ENCODE measurements at regions of chr19 and their contacts with region 1.

Region 1: DNA sequence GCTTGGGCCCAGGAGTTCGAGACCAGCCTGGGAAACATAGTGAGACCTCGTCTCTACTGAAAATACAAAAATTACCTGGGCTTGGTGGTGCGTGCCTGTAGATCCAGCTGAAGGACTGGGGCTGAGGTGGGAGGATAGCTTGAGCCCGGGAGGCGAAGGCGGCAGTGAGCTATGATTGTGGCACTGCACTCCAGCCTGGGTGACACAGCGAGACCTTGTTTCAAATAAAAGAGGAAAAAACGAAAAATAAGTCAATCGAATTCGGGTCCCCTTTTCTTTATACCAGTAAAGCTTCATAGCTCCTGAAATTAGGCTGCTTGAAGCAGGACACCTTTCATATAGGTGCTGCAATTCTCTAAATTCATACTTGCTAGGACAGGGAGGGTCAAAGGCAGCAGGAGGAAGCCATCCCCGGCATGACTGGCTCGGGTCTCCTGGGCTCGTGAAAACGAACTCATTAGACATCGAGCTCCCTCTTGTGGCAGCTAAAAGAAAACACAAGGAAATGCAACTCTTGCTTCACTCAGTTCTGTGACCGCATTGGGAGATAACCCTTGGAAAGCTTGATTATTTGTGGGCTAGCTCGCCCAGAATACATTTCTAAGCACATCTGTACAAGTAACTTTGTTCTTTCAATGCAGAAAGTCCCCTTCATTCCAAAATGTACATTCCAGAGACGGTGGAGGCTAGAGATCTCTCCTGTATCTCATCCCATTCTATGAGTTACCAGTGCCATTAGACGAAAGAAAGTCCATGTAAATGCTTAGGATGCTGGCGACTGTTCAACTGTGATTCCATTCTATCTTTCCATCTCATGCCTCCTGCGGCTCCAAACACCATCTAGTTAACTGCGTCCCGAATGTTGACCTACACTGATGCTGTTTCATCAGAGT is 16.8 kb downstream of the FPR2 start:
- DNase-seq: peak in 4 of 5 donors; percentile 73 to 79 (median 76)
- ATAC-seq: peak; percentile 85 to 96 (median 94)
- H3K4me3 ChIP-seq: no peak overlapping the region
- H3K27ac ChIP-seq: no peak overlapping the region
- H3K4me1 ChIP-seq: peaks cover 0 to 33% (median 3%) of the 10 kb centered on the region in 12 donors
- H3K27me3 ChIP-seq: peaks cover 0 to 8% (median 0%) of the 10 kb centered on the region in 9 donors
- CTCF ChIP-seq: peak; percentile 66 to 85 (median 76)
- POLR2A ChIP-seq: no peak

Region 2: DNA sequence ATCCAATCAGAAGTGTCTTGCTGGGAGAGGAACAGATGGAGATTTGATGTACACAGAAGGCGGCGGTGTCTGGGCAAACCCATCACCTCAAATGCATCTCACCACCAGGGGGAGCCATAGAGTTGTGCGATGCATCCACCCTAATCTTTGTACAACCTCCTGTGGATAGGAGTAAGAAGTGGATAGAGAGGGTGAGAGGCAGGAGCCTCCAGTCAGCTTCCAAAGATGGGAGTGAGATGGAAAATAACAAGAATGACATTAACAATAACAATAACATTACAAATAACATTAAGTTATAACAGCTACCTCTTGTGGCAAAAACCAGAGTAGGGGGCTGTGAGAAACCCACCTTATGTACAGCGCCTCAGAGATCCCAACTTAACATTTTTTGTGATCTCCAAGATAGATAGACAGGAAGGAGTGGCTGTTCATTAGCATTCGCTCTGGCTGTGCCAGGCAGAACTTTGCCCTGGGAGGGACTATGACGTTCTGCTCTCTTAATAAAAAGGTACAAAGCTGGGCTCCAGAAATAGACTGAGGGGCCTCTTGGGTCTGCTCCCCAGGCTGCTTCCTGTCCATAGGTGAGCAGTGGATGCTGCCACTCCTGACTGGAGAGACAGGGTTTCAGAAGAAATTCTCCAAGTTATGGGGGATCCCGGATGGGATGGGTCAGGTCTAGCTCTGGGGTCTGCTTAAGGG is 304.7 kb before region 1 on chr19:
- intact Hi-C with region 1: loop called in 9 of 10 experiments (anchors 2 to 10 kb)
- DNase-seq: peak in 4 of 5 donors; percentile 70 to 77 (median 72)
- ATAC-seq: peak; percentile 67 to 82 (median 78)
- H3K4me3 ChIP-seq: no peak overlapping the region
- H3K27ac ChIP-seq: no peak overlapping the region
- H3K4me1 ChIP-seq: peaks cover 0 to under 1% (median 0%) of the 10 kb centered on the region in 12 donors
- H3K27me3 ChIP-seq: peaks cover 0 to 38% (median 8%) of the 10 kb centered on the region in 9 donors
- CTCF ChIP-seq: peak; percentile 77 to 97 (median 86)
- POLR2A ChIP-seq: no peak

Region 3: GRCh38 chr19:51593969-51594773 is 183.6 kb before region 1 on chr19:
- intact Hi-C with region 1: loop called in 1 of 10 experiments (anchors 10 kb)
- DNase-seq: peak; percentile 98 to 99 (median 99)
- ATAC-seq: peak; percentile 100
- H3K4me3 ChIP-seq: peak overlapping the region; percentile 51 to 82 (median 70)
- H3K27ac ChIP-seq: peak overlapping the region in 10 of 12 donors; percentile 22 to 70 (median 44)
- H3K4me1 ChIP-seq: peaks cover 0 to 19% (median 12%) of the 10 kb centered on the region in 12 donors
- H3K27me3 ChIP-seq: peaks cover 0 to 20% (median under 1%) of the 10 kb centered on the region in 9 donors
- CTCF ChIP-seq: no peak
- POLR2A ChIP-seq: peak in 1 of 2 donors; percentile 52

Region 4: DNA sequence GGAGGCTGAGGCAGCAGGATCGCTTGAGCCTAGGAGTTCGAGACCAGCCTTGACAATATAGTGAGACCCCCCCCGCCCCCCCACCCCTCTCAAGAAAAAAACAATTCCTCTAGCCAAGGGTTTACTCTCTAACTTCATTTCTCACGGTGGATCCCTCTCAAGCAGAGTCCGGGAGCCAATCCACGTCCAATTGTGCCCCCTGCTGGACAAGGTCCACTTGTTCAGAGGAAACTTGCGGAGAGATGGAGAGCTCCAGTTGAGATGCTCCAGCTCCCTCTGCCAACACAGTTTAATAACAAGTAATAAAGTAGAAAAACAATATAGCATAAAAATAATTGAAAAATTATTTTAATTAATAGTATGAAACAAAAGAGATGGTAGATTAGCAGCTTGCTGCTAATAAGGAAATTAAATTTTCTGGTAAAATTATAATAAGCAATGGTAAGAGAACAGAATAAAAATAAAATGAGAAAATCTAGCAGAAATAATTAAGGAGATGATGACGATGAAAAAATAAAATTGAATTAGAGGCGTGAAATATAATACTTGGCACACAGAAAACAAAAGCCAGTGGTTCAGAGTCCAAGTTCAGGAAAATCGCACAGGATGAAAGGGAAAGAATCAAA is 116.7 kb before region 1 on chr19:
- intact Hi-C with region 1: loop called in 7 of 10 experiments (anchors 5 to 10 kb)
- DNase-seq: peak; percentile 70 to 79 (median 76)
- ATAC-seq: peak in 3 of 4 donors; percentile 68 to 86 (median 69)
- H3K4me3 ChIP-seq: no peak overlapping the region
- H3K27ac ChIP-seq: no peak overlapping the region
- H3K4me1 ChIP-seq: peaks cover 0 to 8% (median 0%) of the 10 kb centered on the region in 12 donors
- H3K27me3 ChIP-seq: peaks cover 0 to 40% (median 8%) of the 10 kb centered on the region in 9 donors
- CTCF ChIP-seq: peak; percentile 49 to 72 (median 59)
- POLR2A ChIP-seq: no peak

Region 5: DNA sequence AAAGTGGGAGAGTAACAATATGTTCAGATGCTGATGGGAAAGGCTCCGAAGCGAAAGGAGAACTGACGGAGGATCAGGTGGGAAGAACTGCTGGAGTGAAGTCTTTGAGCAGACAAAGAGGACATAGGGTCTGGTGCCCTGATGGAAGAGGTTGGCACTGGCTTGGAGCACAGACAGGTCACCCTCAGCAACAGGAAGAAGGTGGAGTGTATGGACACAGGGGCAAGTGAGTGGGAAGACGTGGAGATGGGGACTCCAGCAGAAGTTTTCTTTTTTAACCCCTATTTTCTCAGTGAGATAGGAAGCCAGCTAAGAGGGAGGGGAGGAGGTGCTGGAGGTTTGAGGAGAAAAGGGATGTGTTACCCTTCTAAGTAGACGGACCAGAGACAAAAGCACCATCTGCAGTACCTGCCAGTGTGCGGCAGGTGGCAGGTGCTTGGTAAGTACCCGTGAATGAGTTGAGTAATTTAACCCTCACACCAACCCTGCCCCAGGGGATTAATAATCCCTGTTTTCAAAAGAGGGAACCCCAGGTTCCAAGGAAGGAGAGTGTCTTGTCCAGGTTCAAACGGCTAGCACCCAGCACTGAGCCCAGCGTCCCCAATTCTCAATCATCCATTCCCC is 65.2 kb before region 1 on chr19:
- intact Hi-C with region 1: loop called in 1 of 10 experiments (anchors 5 kb)
- DNase-seq: no peak
- ATAC-seq: no peak
- H3K4me3 ChIP-seq: no peak overlapping the region
- H3K27ac ChIP-seq: no peak overlapping the region
- H3K4me1 ChIP-seq: no peaks in the 10 kb centered on the region
- H3K27me3 ChIP-seq: peaks cover 0 to 25% (median 0%) of the 10 kb centered on the region in 9 donors
- CTCF ChIP-seq: peak in 8 of 12 donors; percentile 9 to 42 (median 28)
- POLR2A ChIP-seq: no peak

Region 6: DNA sequence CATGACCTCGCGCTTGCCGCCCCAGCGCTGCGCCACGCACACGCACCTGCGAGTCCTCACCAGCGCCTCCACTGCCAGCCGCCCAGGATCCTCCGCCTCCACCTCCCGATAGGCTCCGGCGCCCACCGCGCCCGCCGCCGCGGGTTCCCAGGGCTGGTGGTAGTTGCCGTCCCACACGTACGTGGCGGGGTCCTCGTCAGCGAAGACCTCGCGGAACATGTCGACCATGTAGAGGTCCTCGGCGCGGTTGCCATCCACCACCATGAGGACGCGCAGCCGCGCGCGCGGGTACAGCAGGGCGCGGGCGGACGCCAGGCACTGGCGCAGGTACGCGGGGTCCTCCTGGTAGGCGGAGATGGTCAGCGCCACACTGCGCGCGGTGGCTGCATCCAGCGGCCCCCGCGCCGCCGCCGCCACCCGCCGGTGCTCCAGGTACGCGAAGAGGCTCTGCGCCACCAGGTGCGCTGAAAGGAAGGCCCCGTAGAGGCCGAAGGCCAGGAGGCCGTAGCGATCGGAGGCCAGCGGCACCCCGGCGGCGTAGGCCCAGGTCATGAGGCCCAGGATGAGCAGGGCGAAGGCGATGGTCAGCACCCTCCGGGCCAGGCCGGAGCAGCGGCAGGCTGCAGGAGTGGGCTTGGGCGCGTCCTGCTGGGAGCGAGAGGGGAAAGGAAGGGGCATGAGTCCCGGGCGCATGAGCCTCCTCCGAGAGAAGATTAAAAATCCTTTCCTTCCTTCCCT is 58.4 kb before region 1 on chr19:
- intact Hi-C with region 1: loop called in 2 of 10 experiments (anchors 2 to 5 kb)
- DNase-seq: no peak
- ATAC-seq: peak in 1 of 4 donors; percentile 18
- H3K4me3 ChIP-seq: peak overlapping the region in 11 of 12 donors; percentile 3 to 49 (median 34)
- H3K27ac ChIP-seq: no peak overlapping the region
- H3K4me1 ChIP-seq: peaks cover 0 to 13% (median 4%) of the 10 kb centered on the region in 12 donors
- H3K27me3 ChIP-seq: peaks cover 14 to 82% (median 44%) of the 10 kb centered on the region in 9 donors
- CTCF ChIP-seq: no peak
- POLR2A ChIP-seq: no peak

Region 7: DNA sequence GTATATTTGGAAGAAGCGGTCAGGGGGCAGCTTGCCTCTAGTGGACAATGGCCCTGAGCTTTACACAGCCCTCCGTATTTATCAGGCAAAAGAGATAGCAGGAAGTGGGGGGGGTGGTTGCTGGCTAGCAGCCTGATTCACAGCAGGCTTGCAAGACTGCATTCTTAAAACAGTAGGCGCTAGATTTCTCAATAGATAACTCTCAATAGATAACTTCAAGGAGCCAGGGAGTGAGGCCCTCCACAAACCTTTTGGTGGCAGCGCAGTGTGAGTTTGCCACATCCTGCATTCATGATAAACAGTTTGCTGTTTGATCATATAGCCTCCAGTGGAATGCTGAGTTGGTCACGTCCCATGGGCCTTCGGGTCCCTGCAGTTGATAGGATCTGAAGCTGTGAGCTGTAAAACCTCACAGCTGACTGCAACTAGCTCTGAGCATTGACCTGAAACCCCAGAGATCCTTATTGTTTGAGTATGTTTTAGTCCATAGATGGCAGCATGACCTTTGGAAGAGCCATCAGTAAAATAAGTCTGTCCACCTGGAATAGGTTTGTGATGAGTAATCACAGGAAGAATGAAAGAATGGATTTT is 29.4 kb after region 1 on chr19:
- intact Hi-C with region 1: loop called in 2 of 10 experiments (anchors 5 kb)
- DNase-seq: peak in 2 of 5 donors; percentile 19 to 37
- ATAC-seq: no peak
- H3K4me3 ChIP-seq: no peak overlapping the region
- H3K27ac ChIP-seq: peak overlapping the region in 2 of 12 donors; percentile 39 to 42
- H3K4me1 ChIP-seq: peaks cover 0 to 94% (median 11%) of the 10 kb centered on the region in 12 donors
- H3K27me3 ChIP-seq: no peaks in the 10 kb centered on the region
- CTCF ChIP-seq: no peak
- POLR2A ChIP-seq: no peak

Region 8: GRCh38 chr19:51884713-51885112 is 106.9 kb after region 1 on chr19:
- intact Hi-C with region 1: no loop called
- DNase-seq: no peak
- ATAC-seq: no peak
- H3K4me3 ChIP-seq: no peak overlapping the region
- H3K27ac ChIP-seq: no peak overlapping the region
- H3K4me1 ChIP-seq: peaks cover 0 to 13% (median 7%) of the 10 kb centered on the region in 12 donors
- H3K27me3 ChIP-seq: no peaks in the 10 kb centered on the region
- CTCF ChIP-seq: no peak
- POLR2A ChIP-seq: no peak

Region 9: GRCh38 chr19:51916167-51916566 is 138.4 kb after region 1 on chr19:
- intact Hi-C with region 1: no loop called
- DNase-seq: no peak
- ATAC-seq: no peak
- H3K4me3 ChIP-seq: no peak overlapping the region
- H3K27ac ChIP-seq: no peak overlapping the region
- H3K4me1 ChIP-seq: no peaks in the 10 kb centered on the region
- H3K27me3 ChIP-seq: no peaks in the 10 kb centered on the region
- CTCF ChIP-seq: no peak
- POLR2A ChIP-seq: no peak

Region 10: GRCh38 chr19:52034051-52034728 is 256.4 kb after region 1 on chr19:
- intact Hi-C with region 1: no loop called
- DNase-seq: no peak
- ATAC-seq: no peak
- H3K4me3 ChIP-seq: no peak overlapping the region
- H3K27ac ChIP-seq: no peak overlapping the region
- H3K4me1 ChIP-seq: peaks cover 0 to 2% (median 0%) of the 10 kb centered on the region in 12 donors
- H3K27me3 ChIP-seq: no peaks in the 10 kb centered on the region
- CTCF ChIP-seq: no peak
- POLR2A ChIP-seq: no peak

Measured in heart left ventricle (tissue), 16 donors.